Cardiac septum (tissue), 1 donor: ENCODE measurements at regions of chr11 and their contacts with region 1.

Region 1: DNA sequence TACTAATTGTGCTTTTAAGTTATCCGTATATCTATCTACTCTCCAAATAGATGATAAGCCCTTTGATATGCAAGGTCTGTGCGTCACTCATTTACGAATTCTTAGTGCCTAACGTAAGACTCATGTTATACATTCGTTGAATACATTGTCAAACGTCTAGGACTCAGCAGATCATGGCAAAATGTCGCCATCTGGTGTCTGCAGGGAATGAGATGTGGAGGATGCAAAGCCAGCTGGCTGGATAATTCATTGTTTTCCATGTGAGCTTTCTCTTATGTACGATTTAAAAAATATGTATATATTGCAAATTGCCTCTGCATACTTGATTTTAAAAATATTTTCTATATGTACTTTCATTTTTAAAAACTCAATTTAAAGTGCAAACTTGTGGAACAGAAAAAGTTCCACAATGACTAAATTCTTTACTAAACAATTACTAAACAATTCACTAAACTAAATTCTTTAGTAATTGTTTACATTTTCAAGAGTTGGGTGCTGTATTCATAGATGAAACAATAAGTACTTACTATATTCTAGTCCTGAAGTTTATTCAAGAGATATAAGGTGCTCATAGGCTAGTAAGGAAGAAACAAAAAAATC is 33.8 kb downstream of the ZNF202 start:
- DNase-seq: no peak

Region 2: DNA sequence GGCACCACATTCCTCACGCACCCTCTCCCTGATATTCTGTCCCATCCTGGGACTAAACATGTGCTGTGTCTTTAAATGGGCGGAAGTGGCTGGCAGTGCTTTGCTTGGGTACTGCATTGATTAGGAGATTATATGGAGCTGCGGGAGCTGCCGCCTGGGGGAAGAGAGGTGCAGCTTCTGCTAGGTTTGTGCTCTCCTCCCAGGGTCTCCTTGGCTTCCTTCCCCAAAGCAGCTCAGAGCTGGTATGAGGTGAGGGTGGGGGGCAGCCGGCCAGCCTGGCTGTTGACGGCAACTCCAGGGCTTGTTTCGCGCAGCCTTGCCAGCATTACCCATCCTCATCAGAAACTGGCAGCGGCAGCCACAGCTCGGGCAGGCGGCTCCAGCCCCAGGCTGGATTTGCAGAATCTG is 182.2 kb before region 1 on chr11:
- intact Hi-C with region 1: no loop called
- DNase-seq: no peak

Region 3: DNA sequence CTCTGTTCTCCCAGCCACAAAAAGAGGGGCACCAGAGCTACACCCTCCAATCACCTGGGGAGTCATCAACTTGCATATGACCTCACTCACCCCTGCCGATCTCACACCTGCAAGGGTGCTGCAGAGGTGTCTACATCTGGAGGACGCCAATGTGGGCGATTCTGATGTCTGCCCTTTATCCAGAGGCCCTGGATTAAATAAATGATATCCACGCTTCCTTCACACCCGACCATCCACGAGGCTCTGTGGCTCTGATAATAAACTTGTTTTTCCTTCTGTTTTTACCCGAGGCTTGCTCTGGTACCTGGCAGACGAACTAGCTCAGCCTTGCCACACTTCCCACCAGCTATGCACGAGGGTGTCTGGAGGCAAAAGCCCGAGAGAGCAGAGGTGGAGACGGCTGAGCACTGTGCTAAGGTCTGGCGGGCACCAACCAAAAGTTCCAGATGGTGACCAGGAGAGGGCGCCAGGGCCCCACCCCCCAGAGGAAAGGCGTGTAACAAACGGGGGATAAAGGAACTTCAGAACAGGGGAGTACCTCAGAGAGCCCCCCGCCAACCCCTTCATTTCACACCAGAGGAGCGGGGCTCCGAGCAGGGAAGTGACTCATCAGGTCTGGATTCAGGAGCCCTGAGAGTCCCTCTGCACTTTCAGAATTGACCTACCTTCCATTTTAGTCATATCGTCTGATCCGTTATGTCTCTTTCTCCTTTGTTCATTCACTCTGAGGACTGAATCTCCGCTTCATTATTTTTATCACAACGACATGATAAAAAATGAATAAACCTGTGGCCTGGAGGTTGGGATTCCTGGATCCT is 66.8 kb before region 1 on chr11:
- intact Hi-C with region 1: loop called (anchors 1 kb)
- DNase-seq: no peak